ENCODE measurements at regions of chr9 and their contacts with region 1.

Region 1: GRCh38 chr9:13088720-13089427 is 190.6 kb downstream of the MPDZ start:
- DNase-seq: peak; percentile 16
- H3K4me3 Mint-ChIP-seq: no peak overlapping the region
- H3K27ac Mint-ChIP-seq: no peak overlapping the region
- H3K4me1 Mint-ChIP-seq: peaks cover 6% of the 10 kb centered on the region
- H3K27me3 Mint-ChIP-seq: peaks cover 15% of the 10 kb centered on the region
- CTCF ChIP-seq: peak; percentile 51

Region 2: GRCh38 chr9:12884737-12885414 is 204.0 kb before region 1 on chr9:
- CTCF ChIA-PET with region 1: no interaction called
- intact Hi-C with region 1: loop called (anchors 5 kb)
- DNase-seq: peak; percentile 22
- H3K4me3 Mint-ChIP-seq: peak overlapping the region; percentile 1
- H3K27ac Mint-ChIP-seq: peak overlapping the region; percentile 61
- H3K4me1 Mint-ChIP-seq: peaks cover 32% of the 10 kb centered on the region
- H3K27me3 Mint-ChIP-seq: no peaks in the 10 kb centered on the region
- CTCF ChIP-seq: no peak

Region 3: DNA sequence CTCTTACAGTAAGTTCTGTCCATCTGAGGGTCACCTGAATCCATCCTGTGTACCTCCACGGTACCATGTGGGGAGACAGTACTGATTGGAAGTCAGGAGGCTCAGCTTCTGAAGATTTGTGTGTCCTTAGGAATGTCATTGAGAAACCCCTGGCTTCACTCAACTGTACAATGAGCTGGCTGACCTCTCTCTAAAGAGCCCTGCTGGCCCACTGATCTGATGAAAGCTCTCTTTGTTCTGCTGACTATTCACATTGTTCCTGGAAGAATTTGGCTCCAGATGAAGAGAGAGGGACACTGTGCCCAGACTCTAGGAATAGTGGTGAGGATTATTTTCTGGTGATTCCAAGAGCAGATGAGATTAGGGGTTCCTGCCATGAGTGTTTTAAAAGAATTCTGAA is 172.8 kb before region 1 on chr9:
- CTCF ChIA-PET with region 1: no interaction called
- intact Hi-C with region 1: loop called (anchors 10 kb)
- DNase-seq: peak; percentile 4
- H3K4me3 Mint-ChIP-seq: no peak overlapping the region
- H3K27ac Mint-ChIP-seq: no peak overlapping the region
- H3K4me1 Mint-ChIP-seq: no peaks in the 10 kb centered on the region
- H3K27me3 Mint-ChIP-seq: no peaks in the 10 kb centered on the region
- CTCF ChIP-seq: no peak

Region 4: GRCh38 chr9:13033959-13034693 is 54.7 kb before region 1 on chr9:
- CTCF ChIA-PET with region 1: no interaction called
- intact Hi-C with region 1: loop called (anchors 2 kb)
- DNase-seq: peak; percentile 51
- H3K4me3 Mint-ChIP-seq: peak overlapping the region; percentile 56
- H3K27ac Mint-ChIP-seq: peak overlapping the region; percentile 45
- H3K4me1 Mint-ChIP-seq: peaks cover 16% of the 10 kb centered on the region
- H3K27me3 Mint-ChIP-seq: no peaks in the 10 kb centered on the region
- CTCF ChIP-seq: peak; percentile 64

Measured in Calu3 (cell line).